Dorsolateral prefrontal cortex (tissue), 120 donors: ENCODE measurements at regions of chr10 and their contacts with region 1.

Region 1: GRCh38 chr10:12129222-12130111 is at the start of gene SEC61A2:
- DNase-seq: peak; percentile 84 to 99 (median 94)
- H3K4me3 ChIP-seq: peak within 1 kb of the TSS; percentile 59 to 100 (median 95)
- H3K27ac ChIP-seq: peak within 1 kb of the TSS in 57 of 59 donors; percentile 29 to 94 (median 85)
- H3K27me3 ChIP-seq: no peaks in the 10 kb centered on the region
- CTCF ChIP-seq: peak in 9 of 56 donors; percentile 1 to 22 (median 14)
- total RNA-seq, gene SEC61A2: 24.7 to 79.3 (median 53.4) TPM

Region 2: DNA sequence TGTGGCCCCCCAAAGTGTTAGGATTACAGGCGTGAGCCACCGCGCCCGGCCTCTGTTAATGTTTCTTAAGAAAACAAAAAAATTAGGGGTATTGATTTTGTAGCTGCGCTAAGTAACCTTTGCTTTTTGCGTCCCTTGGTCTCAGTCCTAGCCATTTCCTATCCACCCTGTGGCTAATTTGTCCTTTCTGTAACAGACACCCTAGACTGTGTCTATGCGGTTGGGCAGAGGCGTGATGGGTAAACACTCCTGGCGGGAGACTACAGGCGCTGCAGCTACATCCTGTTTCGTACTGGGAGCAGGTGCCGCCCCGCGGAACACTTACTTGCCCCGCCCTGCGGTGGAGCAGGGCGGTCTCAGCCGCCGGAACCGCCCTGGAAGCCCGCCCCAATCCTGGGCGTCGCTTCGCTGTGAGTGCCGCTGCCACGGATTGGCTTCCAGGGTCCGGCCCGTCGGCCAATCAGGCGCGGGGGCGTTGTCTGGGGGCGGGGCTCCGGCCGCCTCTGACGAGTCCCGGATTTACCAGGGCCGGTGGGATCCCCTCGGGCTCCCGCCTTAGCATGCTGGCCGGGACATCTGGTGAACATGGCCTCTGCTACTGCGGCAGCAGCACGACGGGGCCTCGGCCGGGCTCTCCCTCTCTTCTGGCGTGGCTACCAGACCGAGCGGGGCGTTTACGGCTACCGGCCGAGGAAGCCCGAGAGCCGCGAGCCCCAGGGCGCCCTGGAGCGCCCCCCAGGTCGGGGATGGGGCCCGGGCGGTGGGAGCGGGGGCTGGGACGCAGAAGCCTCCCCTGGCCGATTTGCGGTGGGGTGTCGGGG is 60.8 kb before region 1 on chr10 and contains the start of gene DHTKD1:
- intact Hi-C with region 1: loop called in 1 of 2 experiments (anchors 2 kb)
- DNase-seq: peak; percentile 97 to 100 (median 98)
- H3K4me3 ChIP-seq: peak within 1 kb of the TSS; percentile 56 to 100 (median 96)
- H3K27ac ChIP-seq: peak within 1 kb of the TSS in 58 of 59 donors; percentile 27 to 96 (median 88)
- H3K27me3 ChIP-seq: no peaks in the 10 kb centered on the region
- CTCF ChIP-seq: peak in 48 of 56 donors; percentile 8 to 60 (median 42)
- total RNA-seq, gene DHTKD1: 19.5 to 48.8 (median 27.8) TPM

Region 3: DNA sequence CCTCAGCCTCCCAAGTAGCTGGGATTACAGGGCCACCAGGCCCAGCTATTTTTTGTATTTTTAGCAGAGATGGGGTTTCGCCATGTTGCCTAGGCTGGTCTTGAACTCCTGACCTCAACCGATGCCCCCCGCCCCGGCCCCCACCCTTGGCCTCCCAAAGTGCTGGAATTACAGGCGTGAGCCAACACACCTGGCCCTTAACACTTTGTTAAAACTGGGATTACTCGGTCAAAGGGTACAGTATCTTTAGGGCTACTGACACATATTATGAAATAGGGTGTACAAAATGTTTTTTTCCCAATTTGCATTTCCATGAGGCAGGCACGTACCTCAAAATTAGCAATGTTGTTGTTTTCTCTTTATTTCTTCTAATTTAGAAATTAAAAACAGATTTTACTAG is 54.7 kb after region 1 on chr10:
- intact Hi-C with region 1: no loop called
- DNase-seq: no peak
- H3K4me3 ChIP-seq: no peak overlapping the region
- H3K27ac ChIP-seq: no peak overlapping the region
- H3K27me3 ChIP-seq: no peaks in the 10 kb centered on the region
- CTCF ChIP-seq: no peak

Region 4: DNA sequence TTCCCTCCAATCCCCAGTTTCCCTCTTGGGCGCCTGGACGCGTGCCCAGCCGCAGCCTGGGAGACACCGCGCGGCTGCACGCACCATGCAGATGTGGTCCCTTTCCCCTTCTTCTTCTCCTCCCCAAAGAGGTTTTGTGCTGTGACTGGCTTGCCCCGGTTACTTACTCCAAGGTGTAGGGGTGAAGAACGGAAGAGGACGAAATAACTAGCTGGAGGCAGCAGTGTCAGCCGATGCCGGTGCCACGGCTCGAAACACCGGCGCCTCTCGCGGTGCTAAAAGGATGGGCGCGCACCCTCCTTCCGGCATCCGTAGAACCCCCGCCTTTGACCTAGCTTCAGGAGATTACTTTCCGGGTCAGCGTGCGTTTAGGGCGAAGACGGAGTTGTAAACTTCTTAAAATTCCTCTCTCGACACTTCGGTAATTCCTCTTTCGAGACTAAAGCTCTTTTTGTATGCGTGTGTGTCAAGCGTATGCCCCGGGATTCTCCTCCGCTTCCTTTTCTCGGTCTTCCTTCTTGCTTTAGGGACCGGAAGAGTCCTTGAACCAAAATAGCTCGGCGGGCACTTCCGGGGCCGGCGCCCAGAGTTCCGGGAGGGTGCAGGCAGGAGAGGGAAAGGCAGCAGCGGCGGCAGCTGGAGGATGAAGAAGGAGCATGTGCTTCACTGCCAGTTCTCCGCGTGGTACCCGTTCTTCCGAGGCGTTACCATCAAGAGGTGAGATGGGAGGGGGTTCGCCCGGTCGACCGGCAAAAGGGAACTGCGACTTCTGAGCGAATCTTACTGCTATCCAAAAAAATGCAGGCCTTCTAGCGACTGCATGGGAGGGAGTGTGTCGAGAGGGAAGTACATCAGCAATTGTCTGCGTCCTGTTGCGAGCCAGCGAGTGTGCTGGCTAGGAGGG is 66.4 kb after region 1 on chr10 and contains the starts of genes CDC123 and NUDT5:
- intact Hi-C with region 1: loop called in 1 of 2 experiments (anchors 2 kb)
- DNase-seq: peak; percentile 82 to 91 (median 87)
- H3K4me3 ChIP-seq: peak within 1 kb of the TSS; percentile 50 to 100 (median 91)
- H3K27ac ChIP-seq: peak within 1 kb of the TSS; percentile 63 to 100 (median 96)
- H3K27me3 ChIP-seq: no peaks in the 10 kb centered on the region
- CTCF ChIP-seq: peak in 33 of 56 donors; percentile 2 to 55 (median 27)
- total RNA-seq, gene CDC123: 32.1 to 76.3 (median 54.4) TPM
- total RNA-seq, gene NUDT5: 19.1 to 48.8 (median 33.7) TPM